Panc1 (cell line): ENCODE measurements at regions of chr1 and their contacts with region 1.

Region 1: GRCh38 chr1:21605964-21606705 is 63.0 kb downstream of the RAP1GAP start:
- DNase-seq: no peak
- ATAC-seq: no peak
- H3K4me3 ChIP-seq: no peak overlapping the region
- H3K27ac ChIP-seq: no peak overlapping the region
- H3K4me1 ChIP-seq: no peaks in the 10 kb centered on the region
- H3K27me3 ChIP-seq: no peaks in the 10 kb centered on the region
- CTCF ChIP-seq: no peak

Region 2: DNA sequence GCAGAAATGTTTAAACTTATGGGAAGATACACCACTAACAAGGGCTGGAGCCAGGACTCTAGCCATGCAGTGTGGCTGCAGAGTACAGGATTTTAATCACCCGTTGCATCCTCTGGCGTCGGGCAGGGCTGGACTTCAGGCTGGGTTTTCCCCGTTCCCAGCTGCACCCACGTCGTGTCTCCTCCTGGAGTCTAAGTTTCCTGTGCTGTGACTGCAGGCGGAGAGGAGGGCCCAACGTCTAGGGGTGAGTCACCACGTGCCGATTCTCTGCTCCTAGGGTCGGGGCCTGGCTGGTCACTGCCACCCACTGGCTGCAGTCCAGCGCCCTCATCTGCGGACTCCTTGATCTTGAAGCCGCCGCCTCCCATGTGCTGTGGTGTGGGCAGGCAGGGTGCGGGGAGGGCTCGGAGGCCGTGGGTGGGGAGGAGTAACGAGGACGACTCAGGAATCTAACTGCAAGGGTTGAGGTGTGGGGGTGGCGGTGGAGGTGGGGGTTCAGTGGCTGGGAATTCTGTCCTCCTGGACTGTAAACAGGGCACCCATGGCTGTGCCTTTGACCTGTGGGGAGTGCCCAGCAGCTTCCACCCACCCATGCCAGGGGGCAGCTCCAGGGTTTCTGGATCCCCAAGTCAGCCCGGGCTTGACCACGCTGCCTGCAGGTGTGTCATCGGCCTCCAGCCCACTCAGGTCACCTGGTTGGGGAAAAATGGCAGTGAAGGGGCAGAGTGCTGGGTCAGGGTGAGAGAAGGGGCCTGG is 19.1 kb before region 1 on chr1:
- CTCF ChIA-PET with region 1: no interaction called
- POLR2A ChIA-PET with region 1: interaction called, 14 read pairs
- in situ Hi-C with region 1: no loop called
- intact Hi-C with region 1: no loop called
- DNase-seq: no peak
- ATAC-seq: peak; percentile 88
- H3K4me3 ChIP-seq: no peak overlapping the region
- H3K27ac ChIP-seq: no peak overlapping the region
- H3K4me1 ChIP-seq: peaks cover 11% of the 10 kb centered on the region
- H3K27me3 ChIP-seq: no peaks in the 10 kb centered on the region
- CTCF ChIP-seq: no peak